Cardiac septum (tissue), 1 donor: ENCODE measurements at regions of chr13 and their contacts with region 1.

Region 1: DNA sequence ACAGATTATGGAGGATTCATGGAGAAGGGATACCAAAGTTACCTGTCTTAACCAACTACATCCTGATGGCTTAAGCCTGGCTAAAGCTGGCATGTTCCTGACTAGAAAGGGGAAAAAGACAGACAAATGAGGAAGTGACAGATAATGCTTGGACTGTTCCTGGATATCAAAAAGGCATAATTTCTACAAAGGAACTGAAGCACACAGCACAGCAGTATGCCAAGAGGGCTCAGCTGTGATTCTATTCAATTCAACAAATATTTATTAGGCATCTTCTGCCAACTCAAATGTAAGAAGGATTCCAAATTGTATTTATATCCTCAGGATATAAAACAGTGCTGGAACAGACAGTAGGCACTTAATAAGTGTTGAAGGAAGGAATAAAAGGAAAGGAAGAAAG is 59.5 kb downstream of the KLF12 start:
- DNase-seq: no peak

Region 2: GRCh38 chr13:73590795-73591194 is 483.9 kb before region 1 on chr13:
- intact Hi-C with region 1: no loop called
- DNase-seq: no peak

Region 3: DNA sequence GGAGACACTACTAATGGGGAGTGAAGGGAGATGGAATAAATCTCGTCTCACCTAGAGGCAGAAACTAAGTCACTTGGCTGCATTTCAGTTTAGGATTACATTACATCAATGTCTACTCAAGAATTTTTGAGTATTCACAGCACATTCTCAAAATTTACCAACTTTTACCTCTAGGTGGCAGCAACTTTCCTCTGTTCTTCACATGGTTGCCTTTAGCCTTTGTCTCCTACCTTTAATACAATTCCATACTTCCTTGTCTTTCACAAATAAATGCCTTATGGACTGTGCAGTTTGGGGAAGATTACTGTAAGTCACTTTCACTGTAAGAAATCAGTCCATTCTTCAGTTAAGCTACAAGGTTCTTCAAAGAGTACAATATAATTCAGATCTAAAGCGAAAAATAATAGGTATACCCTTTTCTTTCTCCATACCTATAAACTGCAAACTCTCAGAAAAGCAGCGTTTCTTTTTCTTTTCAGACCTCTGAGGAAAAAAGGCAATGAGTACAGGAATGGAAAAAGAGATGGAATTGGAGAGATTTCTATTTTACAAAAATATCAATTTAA is 319.9 kb before region 1 on chr13:
- intact Hi-C with region 1: no loop called
- DNase-seq: no peak

Region 4: GRCh38 chr13:73820688-73821087 is 254.0 kb before region 1 on chr13:
- intact Hi-C with region 1: no loop called
- DNase-seq: no peak

Region 5: GRCh38 chr13:73913053-73913740 is 161.5 kb before region 1 on chr13:
- intact Hi-C with region 1: no loop called
- DNase-seq: no peak

Region 6: DNA sequence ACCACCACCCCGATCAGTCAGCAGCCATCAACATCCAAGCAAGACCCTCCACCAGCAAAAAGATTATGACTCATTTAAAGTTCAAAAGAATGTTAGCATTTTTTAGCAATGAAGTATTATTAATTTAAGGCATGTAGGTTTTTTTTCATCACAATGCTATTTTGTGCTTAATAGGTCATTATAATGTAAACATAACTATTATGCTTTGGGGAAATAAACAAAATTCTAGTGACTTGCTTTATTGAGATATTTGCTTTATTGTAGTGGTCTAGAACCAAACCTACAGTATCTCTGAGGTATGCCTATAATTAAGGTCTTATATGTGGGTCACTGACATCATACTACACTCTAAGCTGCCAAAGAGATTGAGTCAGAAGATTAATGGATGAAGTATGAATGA is 39.5 kb after region 1 on chr13:
- intact Hi-C with region 1: loop called (anchors 5 kb)
- DNase-seq: no peak